ENCODE measurements at regions of chr6 and their contacts with region 1.

Region 1: GRCh38 chr6:24855395-24856245 is 56.9 kb upstream of the ARMH2 start:
- DNase-seq: peak; percentile 19
- H3K4me3 ChIP-seq: no peak overlapping the region
- H3K27ac ChIP-seq: peak overlapping the region; percentile 45
- H3K4me1 ChIP-seq: peaks cover 22% of the 10 kb centered on the region
- H3K27me3 ChIP-seq: no peaks in the 10 kb centered on the region
- CTCF ChIP-seq: peak; percentile 91

Region 2: GRCh38 chr6:24774696-24775519 is 80.7 kb before region 1 on chr6 and contains the start of gene GMNN:
- intact Hi-C with region 1: no loop called
- DNase-seq: peak; percentile 99
- H3K4me3 ChIP-seq: peak within 1 kb of the TSS; percentile 88
- H3K27ac ChIP-seq: peak within 1 kb of the TSS; percentile 95
- H3K4me1 ChIP-seq: peaks cover 35% of the 10 kb centered on the region
- H3K27me3 ChIP-seq: no peaks in the 10 kb centered on the region
- CTCF ChIP-seq: no peak
- total RNA-seq, gene GMNN: 8.1 TPM

Region 3: DNA sequence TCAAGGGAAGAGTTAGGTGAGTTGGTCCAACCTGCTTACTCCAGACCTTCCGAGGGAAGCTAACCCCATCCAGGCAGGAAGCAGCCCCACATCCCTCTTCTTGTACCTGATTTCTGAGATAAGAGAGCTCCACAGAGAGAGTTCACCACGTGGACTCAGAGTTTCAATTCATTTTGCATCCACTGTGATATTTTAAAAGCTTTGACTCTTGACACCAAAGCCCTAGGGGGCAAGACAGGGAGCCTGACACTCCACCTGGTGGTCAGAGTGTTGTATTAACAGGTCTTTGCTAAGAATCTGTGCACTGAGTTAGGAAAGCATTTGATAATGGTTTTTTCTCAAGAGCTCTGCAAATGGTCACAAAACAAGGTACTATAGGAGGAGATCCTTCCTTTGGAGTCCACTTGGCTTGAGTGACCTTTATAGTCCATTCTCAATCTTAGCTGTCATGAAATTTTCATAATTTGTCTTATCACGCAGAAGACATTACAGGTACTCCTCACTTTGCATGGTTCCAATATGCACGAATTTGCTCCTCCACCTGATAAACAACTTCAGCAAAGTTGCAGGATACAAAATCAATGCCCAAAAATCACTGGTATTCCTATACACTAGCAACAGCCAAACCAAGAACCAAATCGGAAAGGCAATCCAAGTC is 136.3 kb after region 1 on chr6:
- intact Hi-C with region 1: loop called (anchors 5 kb)
- DNase-seq: no peak
- H3K4me3 ChIP-seq: no peak overlapping the region
- H3K27ac ChIP-seq: no peak overlapping the region
- H3K4me1 ChIP-seq: no peaks in the 10 kb centered on the region
- H3K27me3 ChIP-seq: no peaks in the 10 kb centered on the region
- CTCF ChIP-seq: peak; percentile 82

Region 4: DNA sequence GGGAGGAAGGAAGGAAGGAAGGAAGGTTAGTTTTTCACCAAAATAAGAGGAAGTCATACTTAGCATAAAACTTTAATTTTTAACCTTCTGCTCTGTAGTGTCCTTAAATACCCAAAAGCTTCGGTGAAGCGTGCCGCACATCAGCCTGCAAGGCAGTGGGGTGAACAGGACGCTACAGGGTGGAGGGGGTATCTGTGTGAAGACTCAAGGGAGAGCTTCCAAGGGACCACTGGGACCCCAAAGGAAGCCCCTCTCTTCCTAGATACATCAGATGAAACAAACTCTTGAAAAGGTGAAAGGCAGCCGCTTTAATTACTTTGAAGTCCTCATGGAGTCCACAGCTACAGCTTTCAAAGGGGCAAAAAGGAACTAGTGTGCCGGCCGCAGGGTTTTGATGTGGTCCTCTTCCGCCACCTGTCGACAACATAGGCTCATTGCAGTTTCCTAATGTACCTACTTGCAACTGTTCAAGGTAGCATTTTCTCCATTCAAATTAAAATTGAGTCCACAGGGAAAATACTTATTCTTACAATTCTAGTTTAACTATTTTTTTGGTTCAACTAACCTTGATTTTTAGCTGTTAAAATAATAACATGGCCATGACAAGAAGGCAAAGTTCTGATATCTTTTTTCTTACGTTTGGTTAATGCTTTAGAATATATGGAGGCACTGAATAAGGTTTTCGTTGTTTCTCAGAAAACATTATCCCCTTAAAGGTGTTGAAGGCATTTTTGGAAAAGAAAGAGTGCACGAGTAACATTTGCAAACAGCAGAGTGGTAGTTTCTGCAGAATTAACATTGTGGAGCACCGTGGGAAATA is 215.1 kb after region 1 on chr6:
- intact Hi-C with region 1: loop called (anchors 5 kb)
- DNase-seq: peak; percentile 58
- H3K4me3 ChIP-seq: no peak overlapping the region
- H3K27ac ChIP-seq: peak overlapping the region; percentile 35
- H3K4me1 ChIP-seq: no peaks in the 10 kb centered on the region
- H3K27me3 ChIP-seq: no peaks in the 10 kb centered on the region
- CTCF ChIP-seq: peak; percentile 96

Measured in left ventricle myocardium inferior (tissue), 1 donor.